BJ (cell line): ENCODE measurements at regions of chr16 and their contacts with region 1.

Region 1: GRCh38 chr16:14415291-14415690 is 214.8 kb downstream of the PARN start:
- DNase-seq: no peak
- H3K4me3 ChIP-seq: no peak overlapping the region
- H3K27me3 ChIP-seq: no peaks in the 10 kb centered on the region
- CTCF ChIP-seq: no peak

Region 2: GRCh38 chr16:14300705-14301168 is 114.6 kb before region 1 on chr16:
- CTCF ChIA-PET with region 1: no interaction called
- POLR2A ChIA-PET with region 1: no interaction called
- DNase-seq: no peak
- H3K4me3 ChIP-seq: peak overlapping the region; percentile 67
- H3K27me3 ChIP-seq: no peaks in the 10 kb centered on the region
- CTCF ChIP-seq: peak; percentile 68

Region 3: GRCh38 chr16:14399378-14400284 is 15.7 kb before region 1 on chr16:
- CTCF ChIA-PET with region 1: no interaction called
- POLR2A ChIA-PET with region 1: no interaction called
- DNase-seq: peak; percentile 59
- H3K4me3 ChIP-seq: no peak overlapping the region; the same call in 1 of the 2 replicates
- H3K27me3 ChIP-seq: no peaks in the 10 kb centered on the region
- CTCF ChIP-seq: 0 out of 2 replicates have a peak, but pooled peaks have one; percentile 9

Region 4: DNA sequence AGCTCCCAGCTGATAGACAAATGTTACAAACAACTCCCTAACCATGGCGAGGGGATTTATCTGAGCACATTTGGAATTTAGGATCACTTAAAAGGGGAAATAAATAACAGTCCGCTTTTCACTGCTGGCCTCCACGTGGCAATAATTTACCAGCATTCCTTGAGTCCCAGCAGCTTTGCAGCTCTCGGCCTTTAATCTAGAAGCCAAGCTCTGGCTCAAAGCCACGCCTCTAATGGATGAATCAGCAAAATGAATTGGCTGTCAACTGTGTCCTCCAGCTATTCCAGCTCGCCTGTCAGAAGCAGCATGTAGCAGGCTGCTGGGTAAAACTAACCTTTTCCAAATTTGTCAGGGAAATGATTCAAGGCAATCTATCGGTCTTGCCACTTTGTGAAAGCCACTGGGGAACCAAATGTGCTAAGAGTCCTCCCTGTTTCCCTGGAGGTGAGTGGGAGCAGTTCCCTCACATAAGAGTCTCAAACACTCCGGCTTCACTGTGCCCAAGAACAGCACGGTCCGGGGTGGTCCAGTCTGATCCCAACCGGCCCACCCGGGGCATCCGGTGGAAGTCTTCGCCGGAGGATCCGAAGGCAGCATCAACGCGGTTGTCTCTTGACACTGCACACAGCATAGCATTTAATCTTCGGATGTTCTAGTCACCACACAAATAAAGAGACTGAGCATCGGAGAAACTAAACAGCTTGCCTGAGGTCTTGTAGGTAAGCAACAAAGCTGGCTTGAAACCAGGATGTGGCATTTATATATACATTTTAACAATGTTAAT is 71.4 kb after region 1 on chr16:
- CTCF ChIA-PET with region 1: no interaction called
- POLR2A ChIA-PET with region 1: interaction called, 22 read pairs
- DNase-seq: peak; percentile 85
- H3K4me3 ChIP-seq: peak overlapping the region; percentile 23
- H3K27me3 ChIP-seq: no peaks in the 10 kb centered on the region
- CTCF ChIP-seq: no peak